Activated T-helper 1 cell treated with anti-CD3 and anti-CD28 coated beads, Interleukin-12 subunit alpha, Interleukin-12 subunit beta, Interleukin-2, Interleukin-4 antibody, amounts not matched to agents 30 ng/mL and 10 ng/mL and 1 ng/mL, durations not matched to agents 14 hours and 24 hours and 36 hours (primary cell): ENCODE measurements at regions of chr10 and their contacts with region 1.

Region 1: GRCh38 chr10:60944159-60944909 is at the start of gene RHOBTB1:
- DNase-seq: no peak
- H3K4me3 Mint-ChIP-seq: peak within 1 kb of the TSS; percentile 74
- H3K27ac Mint-ChIP-seq: peak within 1 kb of the TSS; percentile 77
- H3K4me1 Mint-ChIP-seq: peaks cover 9% of the 10 kb centered on the region
- H3K27me3 Mint-ChIP-seq: peaks cover 73% of the 10 kb centered on the region
- total RNA-seq, gene RHOBTB1: not detected in 2 replicates

Region 2: GRCh38 chr10:60739581-60739980 is 204.8 kb before region 1 on chr10:
- intact Hi-C with region 1: no loop called
- DNase-seq: no peak
- H3K4me3 Mint-ChIP-seq: no peak overlapping the region
- H3K27ac Mint-ChIP-seq: no peak overlapping the region
- H3K4me1 Mint-ChIP-seq: peaks cover 19% of the 10 kb centered on the region
- H3K27me3 Mint-ChIP-seq: peaks cover 2% of the 10 kb centered on the region

Region 3: GRCh38 chr10:60778214-60779029 is 165.9 kb before region 1 on chr10 and contains the start of gene CDK1:
- intact Hi-C with region 1: loop called (anchors 2 kb)
- DNase-seq: peak; percentile 97
- H3K4me3 Mint-ChIP-seq: peak within 1 kb of the TSS; percentile 99
- H3K27ac Mint-ChIP-seq: peak within 1 kb of the TSS; percentile 97
- H3K4me1 Mint-ChIP-seq: peaks cover 35% of the 10 kb centered on the region
- H3K27me3 Mint-ChIP-seq: peaks cover 2% of the 10 kb centered on the region
- total RNA-seq, gene CDK1: 100 and 104 TPM in 2 replicates